ENCODE measurements at regions of chr15 and their contacts with region 1.

Region 1: DNA sequence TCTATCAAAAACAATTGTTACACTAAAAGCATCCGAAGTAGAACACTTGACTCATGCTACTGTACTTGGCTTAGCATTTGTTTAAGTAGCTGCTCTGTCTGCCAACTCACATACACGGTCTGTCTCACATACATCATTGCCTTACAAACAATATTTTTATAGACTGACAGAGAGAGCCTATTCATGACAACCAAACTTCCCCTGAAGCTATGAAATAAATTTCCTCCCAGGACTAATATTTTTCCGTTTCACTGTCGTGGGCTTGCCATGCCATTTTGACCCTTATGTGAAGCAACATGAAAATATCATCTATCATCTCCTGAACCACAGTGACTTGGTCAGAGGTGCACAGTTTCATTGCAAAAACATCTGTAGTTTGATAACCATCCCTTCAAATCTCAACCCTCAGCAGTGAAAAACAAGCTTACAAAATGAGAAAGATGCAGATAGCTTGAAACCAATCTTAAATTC is 66.5 kb upstream of the PYGO1 start:
- DNase-seq: peak; percentile 57
- ATAC-seq: no peak
- H3K4me3 ChIP-seq: no peak overlapping the region
- H3K27ac ChIP-seq: no peak overlapping the region
- H3K4me1 ChIP-seq: no peaks in the 10 kb centered on the region
- H3K27me3 ChIP-seq: no peaks in the 10 kb centered on the region
- CTCF ChIP-seq: no peak
- POLR2A ChIP-seq: no peak
- RAD21 ChIP-seq: no peak

Region 2: GRCh38 chr15:55196458-55197361 is 457.9 kb before region 1 on chr15 and contains the start of gene RSL24D1:
- CTCF ChIA-PET with region 1: no interaction called
- POLR2A ChIA-PET with region 1: no interaction called
- dilution Hi-C with region 1: no loop called
- in situ Hi-C with region 1: no loop called
- intact Hi-C with region 1: no loop called
- DNase-seq: peak; percentile 99
- ATAC-seq: peak; percentile 99
- H3K4me3 ChIP-seq: peak within 1 kb of the TSS; percentile 80
- H3K27ac ChIP-seq: peak within 1 kb of the TSS; percentile 91
- H3K4me1 ChIP-seq: no peaks in the 10 kb centered on the region; the same call in 1 of the 2 replicates
- H3K27me3 ChIP-seq: no peaks in the 10 kb centered on the region
- CTCF ChIP-seq: peak; percentile 32; the same call in 1 of the 2 replicates
- POLR2A ChIP-seq: peak; percentile 85
- RAD21 ChIP-seq: no peak
- total RNA-seq, gene RSL24D1: 36.7 and 89.2 TPM in 2 replicates

Region 3: DNA sequence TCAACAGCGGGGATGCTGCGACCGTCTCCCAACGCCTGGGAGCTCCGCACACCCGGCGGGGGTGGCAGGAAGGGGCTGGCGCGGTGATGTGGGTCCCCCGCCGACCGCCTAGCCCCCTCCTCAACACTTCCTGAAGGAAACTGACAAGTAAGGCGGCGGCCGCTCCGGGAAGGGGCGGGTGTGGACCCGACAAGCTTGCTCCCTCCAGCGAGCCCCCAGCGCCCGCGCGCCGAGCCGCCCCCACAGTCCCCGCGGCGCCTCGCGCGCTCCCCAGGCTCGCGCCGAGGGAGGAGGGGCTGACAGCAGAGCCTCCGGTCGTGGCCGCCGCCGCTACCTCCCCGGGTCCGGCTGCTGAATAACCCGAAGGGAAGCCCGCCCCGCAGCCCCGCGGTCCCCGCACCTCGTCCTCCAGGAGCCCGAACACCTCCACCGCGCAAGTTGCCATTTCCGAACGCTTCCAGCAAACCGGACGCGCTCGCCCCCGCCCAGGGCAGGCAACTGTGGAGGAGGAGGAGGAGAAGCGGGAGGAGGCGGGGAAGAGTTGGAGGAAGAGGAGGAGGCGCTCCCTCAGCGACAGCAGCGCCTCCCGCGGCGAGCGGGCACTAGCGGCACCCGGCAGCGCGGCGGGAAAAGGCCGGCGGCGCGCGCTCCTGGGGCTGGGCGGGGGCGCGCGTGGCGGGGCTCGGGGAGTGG is 338.7 kb after region 1 on chr15 and contains the start of gene NEDD4:
- CTCF ChIA-PET with region 1: no interaction called
- POLR2A ChIA-PET with region 1: no interaction called
- dilution Hi-C with region 1: no loop called
- in situ Hi-C with region 1: no loop called
- intact Hi-C with region 1: no loop called
- DNase-seq: peak; percentile 86
- ATAC-seq: peak; percentile 96
- H3K4me3 ChIP-seq: peak within 1 kb of the TSS; percentile 86
- H3K27ac ChIP-seq: peak within 1 kb of the TSS; percentile 96
- H3K4me1 ChIP-seq: peaks cover 4% of the 10 kb centered on the region
- H3K27me3 ChIP-seq: no peaks in the 10 kb centered on the region
- CTCF ChIP-seq: peak; percentile 61
- POLR2A ChIP-seq: no peak
- RAD21 ChIP-seq: no peak; the same call in 1 of the 2 replicates
- total RNA-seq, gene NEDD4: 80.7 and 106 TPM in 2 replicates

Region 4: DNA sequence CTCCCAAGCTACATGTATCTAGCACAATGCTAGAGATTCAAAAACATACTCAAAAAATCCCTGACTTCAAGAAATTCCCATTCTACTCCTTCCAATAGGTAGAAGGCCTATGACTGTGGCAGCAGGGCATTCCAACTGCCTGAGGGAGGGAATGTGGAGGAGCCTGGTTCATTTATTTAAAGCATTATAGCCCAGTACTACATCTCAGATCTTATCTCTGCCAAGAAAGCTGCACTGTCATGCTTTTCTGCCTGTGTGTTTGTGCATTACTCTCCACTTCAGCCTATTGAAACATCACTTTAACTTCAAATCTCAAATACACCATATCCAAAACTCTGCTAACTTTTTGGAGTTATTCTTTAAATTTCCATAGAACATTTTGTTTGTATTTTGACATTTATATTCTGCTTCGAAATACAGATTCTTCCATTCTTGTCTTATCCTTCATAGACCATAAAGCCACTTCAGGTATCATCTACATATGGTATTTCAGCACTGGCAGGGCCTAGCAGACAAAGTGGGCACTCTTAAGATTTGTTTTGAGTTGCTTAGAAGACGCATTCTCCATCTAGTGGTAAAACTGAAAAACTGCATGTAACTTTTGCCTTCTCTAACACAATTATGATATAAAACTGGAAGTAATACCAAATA is 397.9 kb after region 1 on chr15:
- CTCF ChIA-PET with region 1: no interaction called
- POLR2A ChIA-PET with region 1: no interaction called
- dilution Hi-C with region 1: no loop called
- in situ Hi-C with region 1: loop called (anchors 10 kb)
- intact Hi-C with region 1: loop called (anchors 2 kb)
- DNase-seq: peak; percentile 68
- ATAC-seq: peak; percentile 90
- H3K4me3 ChIP-seq: no peak overlapping the region
- H3K27ac ChIP-seq: no peak overlapping the region
- H3K4me1 ChIP-seq: peaks cover 7% of the 10 kb centered on the region
- H3K27me3 ChIP-seq: no peaks in the 10 kb centered on the region
- CTCF ChIP-seq: peak; percentile 74
- POLR2A ChIP-seq: no peak
- RAD21 ChIP-seq: peak; percentile 71

Measured in IMR-90 (cell line).